ENCODE measurements at regions of chr3 and their contacts with region 1.

Region 1: DNA sequence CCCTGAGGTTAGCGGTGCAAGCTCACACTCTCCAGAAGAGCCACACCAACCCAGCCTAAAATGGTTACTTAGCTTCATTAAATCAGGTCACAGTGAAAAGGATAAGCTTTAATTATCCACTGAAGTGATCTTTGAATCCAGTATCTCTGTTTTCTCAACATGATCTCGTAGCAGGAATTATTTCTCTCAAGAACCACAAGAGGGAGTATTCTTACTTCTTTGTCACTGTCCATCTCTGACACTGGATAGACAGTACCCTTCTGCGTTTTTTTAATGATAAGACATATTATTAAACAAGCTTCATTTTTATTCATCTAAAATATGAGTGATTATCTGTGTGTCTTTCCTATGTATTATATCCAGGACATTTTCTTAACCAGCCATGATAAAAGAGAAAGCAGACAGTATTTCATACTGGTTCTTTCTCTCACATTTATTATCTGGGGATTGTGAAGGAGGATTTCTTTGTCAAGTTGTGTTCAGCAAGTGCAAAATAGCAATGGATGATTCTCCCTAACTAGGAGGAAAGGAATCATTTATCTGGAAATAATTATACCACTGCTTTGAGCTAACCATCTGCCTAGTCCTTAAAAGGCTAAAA is 105.4 kb upstream of the CCDC54 start:
- DNase-seq: no peak
- H3K4me3 ChIP-seq: no peak overlapping the region
- H3K4me3 Mint-ChIP-seq: no peak overlapping the region
- H3K27ac Mint-ChIP-seq: no peak overlapping the region
- H3K4me1 ChIP-seq: no peaks in the 10 kb centered on the region
- H3K4me1 Mint-ChIP-seq: no peaks in the 10 kb centered on the region
- H3K27me3 ChIP-seq: no peaks in the 10 kb centered on the region; the same call in none of the 2 replicates
- H3K27me3 Mint-ChIP-seq: peaks cover 4% of the 10 kb centered on the region
- CTCF ChIP-seq: peak; percentile 36 to 49

Region 2: DNA sequence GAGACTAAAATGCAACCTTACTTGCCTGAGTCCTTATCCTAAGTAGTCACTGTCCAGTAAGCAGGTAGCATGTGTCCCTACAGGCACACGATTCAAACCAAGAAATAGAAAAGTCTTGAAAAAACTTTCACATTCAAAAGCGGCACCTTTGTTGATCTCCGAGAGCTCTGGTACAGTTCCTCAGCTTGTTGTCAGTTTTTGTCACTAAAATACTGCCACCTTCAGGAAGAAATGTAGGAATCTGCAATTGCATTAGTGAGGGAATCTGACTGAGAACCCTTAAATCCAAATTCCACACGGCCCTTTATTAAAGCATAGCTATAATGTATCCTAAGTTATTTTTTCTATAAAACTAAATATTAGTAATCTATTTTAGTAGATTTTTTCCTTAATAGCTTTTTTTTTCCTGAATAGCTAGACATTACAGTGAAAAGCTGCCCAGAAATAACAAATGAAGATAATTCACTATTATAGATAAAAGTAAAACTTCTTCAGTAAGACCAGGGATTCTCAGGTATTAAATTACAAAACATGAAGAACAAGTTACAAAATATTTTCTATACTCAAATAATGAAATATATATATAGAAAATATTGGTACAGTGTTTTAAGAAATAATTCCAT is 149.4 kb after region 1 on chr3:
- CTCF ChIA-PET with region 1: interaction called, 8 read pairs
- POLR2A ChIA-PET with region 1: no interaction called
- intact Hi-C with region 1: loop called (anchors 2 kb)
- DNase-seq: peak in 1 of 2 experiments; percentile 37
- H3K4me3 ChIP-seq: no peak overlapping the region
- H3K4me3 Mint-ChIP-seq: peak overlapping the region; percentile 15
- H3K27ac Mint-ChIP-seq: no peak overlapping the region
- H3K4me1 ChIP-seq: no peaks in the 10 kb centered on the region
- H3K4me1 Mint-ChIP-seq: no peaks in the 10 kb centered on the region
- H3K27me3 ChIP-seq: no peaks in the 10 kb centered on the region
- H3K27me3 Mint-ChIP-seq: peaks cover 16% of the 10 kb centered on the region
- CTCF ChIP-seq: peak; percentile 51 to 56

Region 3: DNA sequence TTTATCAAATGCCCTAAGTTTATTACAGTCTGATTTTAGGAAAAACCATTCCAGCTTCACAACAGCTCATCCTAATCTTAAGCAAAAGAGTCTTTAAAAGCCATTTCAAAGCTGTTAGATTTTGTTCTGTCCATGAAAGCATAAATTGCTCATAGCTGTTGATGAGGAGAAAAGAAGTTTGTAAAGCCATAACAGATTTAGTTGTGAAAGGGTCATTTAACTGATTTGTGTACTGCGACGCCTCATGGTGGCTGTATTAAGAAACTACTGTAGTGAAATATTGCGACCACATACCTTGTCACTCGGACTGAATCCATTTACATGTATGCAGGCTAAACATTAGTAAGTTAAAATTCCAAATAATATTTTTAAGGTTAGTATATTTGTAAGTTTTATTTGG is 271.8 kb after region 1 on chr3:
- CTCF ChIA-PET with region 1: no interaction called
- POLR2A ChIA-PET with region 1: no interaction called
- intact Hi-C with region 1: loop called (anchors 1 kb)
- DNase-seq: no peak
- H3K4me3 ChIP-seq: no peak overlapping the region
- H3K4me3 Mint-ChIP-seq: no peak overlapping the region
- H3K27ac Mint-ChIP-seq: no peak overlapping the region
- H3K4me1 ChIP-seq: no peaks in the 10 kb centered on the region
- H3K4me1 Mint-ChIP-seq: no peaks in the 10 kb centered on the region
- H3K27me3 ChIP-seq: no peaks in the 10 kb centered on the region
- H3K27me3 Mint-ChIP-seq: peaks cover 3% of the 10 kb centered on the region
- CTCF ChIP-seq: peak; percentile 29 to 35

Region 4: DNA sequence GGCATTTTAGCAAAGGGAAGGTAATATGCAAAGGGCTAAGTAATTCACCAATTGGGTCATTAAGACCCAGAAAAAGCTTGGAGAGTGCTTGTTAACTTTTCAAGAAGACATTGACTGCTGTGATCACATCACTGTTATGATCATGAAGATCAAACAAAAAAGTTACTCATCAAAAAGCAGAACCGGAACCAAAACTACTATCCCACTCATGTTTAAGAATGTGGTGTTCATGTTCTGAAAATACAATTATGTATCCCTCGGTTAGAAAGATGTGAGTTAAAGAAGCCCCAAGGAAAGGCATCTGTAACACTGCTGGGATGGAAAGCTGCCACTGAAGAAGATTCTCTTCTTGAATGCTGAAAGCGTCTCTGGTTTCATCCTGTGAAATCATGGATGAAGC is 283.5 kb after region 1 on chr3:
- CTCF ChIA-PET with region 1: no interaction called
- POLR2A ChIA-PET with region 1: no interaction called
- intact Hi-C with region 1: no loop called
- DNase-seq: no peak
- H3K4me3 ChIP-seq: no peak overlapping the region
- H3K4me3 Mint-ChIP-seq: no peak overlapping the region
- H3K27ac Mint-ChIP-seq: no peak overlapping the region
- H3K4me1 ChIP-seq: no peaks in the 10 kb centered on the region
- H3K4me1 Mint-ChIP-seq: no peaks in the 10 kb centered on the region
- H3K27me3 ChIP-seq: no peaks in the 10 kb centered on the region
- H3K27me3 Mint-ChIP-seq: peaks cover 14% of the 10 kb centered on the region
- CTCF ChIP-seq: no peak

Measured in Caco-2 (cell line).